Activated naive CD4-positive, alpha-beta T cell treated with anti-CD3 and anti-CD28 coated beads for 36 hours (primary cell): ENCODE measurements at regions of chr20 and their contacts with region 1.

Region 1: GRCh38 chr20:45971675-45972499 is at the start of gene ZNF335:
- DNase-seq: peak; percentile 93
- H3K4me3 Mint-ChIP-seq: peak within 1 kb of the TSS; percentile 93
- H3K27ac Mint-ChIP-seq: peak within 1 kb of the TSS; percentile 100
- H3K4me1 Mint-ChIP-seq: peaks cover 16% of the 10 kb centered on the region
- H3K27me3 Mint-ChIP-seq: no peaks in the 10 kb centered on the region
- total RNA-seq, gene ZNF335: 26.8 to 28.0 TPM

Region 2: GRCh38 chr20:45792332-45792686 is 179.6 kb before region 1 on chr20:
- CTCF ChIA-PET with region 1: interaction called, 8 read pairs
- intact Hi-C with region 1: loop called (anchors 2 kb)
- DNase-seq: no peak
- H3K4me3 Mint-ChIP-seq: peak overlapping the region; percentile 86
- H3K27ac Mint-ChIP-seq: peak overlapping the region; percentile 63
- H3K4me1 Mint-ChIP-seq: peaks cover 9% of the 10 kb centered on the region
- H3K27me3 Mint-ChIP-seq: no peaks in the 10 kb centered on the region

Region 3: GRCh38 chr20:45857114-45857881 is 114.6 kb before region 1 on chr20 and contains the starts of genes ACOT8 and ZSWIM3:
- CTCF ChIA-PET with region 1: interaction called, 5 read pairs
- intact Hi-C with region 1: loop called (anchors 1 kb)
- DNase-seq: peak; percentile 98
- H3K4me3 Mint-ChIP-seq: peak within 1 kb of the TSS; percentile 95
- H3K27ac Mint-ChIP-seq: peak within 1 kb of the TSS; percentile 98
- H3K4me1 Mint-ChIP-seq: peaks cover 44% of the 10 kb centered on the region
- H3K27me3 Mint-ChIP-seq: no peaks in the 10 kb centered on the region
- total RNA-seq, gene ACOT8: 21.4 to 23.3 TPM
- total RNA-seq, gene ZSWIM3: 3.3 to 3.7 TPM

Region 4: DNA sequence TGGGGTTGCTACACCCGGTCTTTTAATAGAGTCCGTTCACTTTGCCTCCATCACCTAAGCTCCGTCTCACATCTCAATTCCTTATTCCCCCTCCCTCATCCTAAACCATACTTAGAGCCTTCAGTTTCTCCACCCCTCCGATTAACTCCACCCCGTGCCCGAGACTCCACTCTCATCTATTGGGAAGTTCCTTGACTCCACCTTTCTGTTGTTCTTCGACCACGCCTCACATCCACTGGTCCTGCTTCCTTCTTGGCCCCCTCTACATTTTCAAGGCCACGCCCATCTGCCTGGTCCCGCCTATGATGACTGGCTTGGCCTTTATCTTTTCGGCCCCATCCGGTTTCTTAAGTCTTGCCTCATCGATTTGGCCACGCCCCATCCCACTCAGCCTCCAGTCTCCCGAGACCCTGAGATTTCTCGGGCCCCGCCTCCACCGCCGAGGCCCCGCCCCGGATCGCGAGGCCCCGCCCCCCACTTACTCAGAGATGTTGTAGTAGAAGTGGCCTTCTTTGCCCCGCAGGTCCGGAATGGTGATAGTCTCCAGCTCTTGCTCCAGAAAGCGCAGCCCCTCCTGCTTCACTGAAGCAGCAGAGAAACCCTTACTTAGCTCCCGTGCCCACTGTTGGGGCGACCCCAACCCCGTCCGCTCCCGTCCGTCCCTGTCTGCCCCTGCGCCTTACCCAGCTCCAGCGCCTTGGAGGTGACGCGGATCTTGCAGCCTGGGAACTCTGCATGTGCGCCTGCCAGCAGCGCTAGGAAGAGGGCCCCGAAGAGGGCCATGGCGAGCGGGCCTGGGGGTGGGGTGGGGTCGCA is 61.0 kb before region 1 on chr20:
- CTCF ChIA-PET with region 1: interaction called, 4 read pairs
- intact Hi-C with region 1: loop called (anchors 1 kb)
- DNase-seq: peak; percentile 97
- H3K4me3 Mint-ChIP-seq: peak overlapping the region; percentile 82
- H3K27ac Mint-ChIP-seq: peak overlapping the region; percentile 25
- H3K4me1 Mint-ChIP-seq: peaks cover 20% of the 10 kb centered on the region
- H3K27me3 Mint-ChIP-seq: peaks cover 16% of the 10 kb centered on the region

Region 5: GRCh38 chr20:45953672-45954071 is 18.2 kb before region 1 on chr20:
- CTCF ChIA-PET with region 1: interaction called, 62 read pairs
- intact Hi-C with region 1: no loop called
- DNase-seq: no peak
- H3K4me3 Mint-ChIP-seq: no peak overlapping the region
- H3K27ac Mint-ChIP-seq: no peak overlapping the region
- H3K4me1 Mint-ChIP-seq: no peaks in the 10 kb centered on the region
- H3K27me3 Mint-ChIP-seq: no peaks in the 10 kb centered on the region

Region 6: DNA sequence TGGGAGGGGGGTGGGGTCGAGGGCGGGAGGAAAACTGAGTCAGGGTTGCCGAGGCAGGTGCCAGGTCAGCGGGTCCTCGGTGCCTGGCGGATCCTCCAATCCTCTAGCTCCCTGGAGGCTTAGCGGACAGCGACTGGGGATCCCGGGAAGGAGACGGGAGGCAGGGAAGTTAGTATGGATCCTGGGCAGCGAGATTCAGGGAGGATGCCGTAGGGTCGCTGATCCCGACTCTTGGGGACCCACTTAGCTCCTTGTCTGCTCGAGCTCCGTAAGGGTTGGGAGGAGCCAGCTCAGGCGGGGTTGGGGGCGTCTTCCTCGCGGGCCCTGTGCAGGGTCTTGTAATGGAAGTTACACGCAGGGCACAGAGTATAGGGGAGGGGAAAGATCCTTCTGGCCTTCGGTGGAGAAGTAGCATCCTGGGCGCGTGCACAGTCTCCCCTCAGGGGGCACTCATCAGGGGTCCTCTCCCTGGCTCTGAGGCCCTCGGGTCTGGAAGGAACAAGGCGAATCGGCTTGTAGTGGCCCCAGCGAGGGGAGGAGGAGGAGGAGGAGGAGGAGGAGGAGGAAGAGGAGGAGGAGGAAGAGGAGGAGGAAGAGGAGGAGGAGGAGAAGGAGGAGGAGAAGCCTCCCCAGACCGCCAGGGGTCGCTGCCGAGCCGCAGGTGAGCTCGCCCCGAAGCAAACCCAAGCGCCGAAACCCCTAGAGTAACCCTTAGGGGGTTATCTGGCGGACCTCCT is 50.7 kb after region 1 on chr20:
- CTCF ChIA-PET with region 1: interaction called, 9 read pairs
- intact Hi-C with region 1: loop called (anchors 1 kb)
- DNase-seq: peak; percentile 83
- H3K4me3 Mint-ChIP-seq: peak overlapping the region; percentile 63
- H3K27ac Mint-ChIP-seq: no peak overlapping the region
- H3K4me1 Mint-ChIP-seq: peaks cover 8% of the 10 kb centered on the region
- H3K27me3 Mint-ChIP-seq: peaks cover 32% of the 10 kb centered on the region

Region 7: DNA sequence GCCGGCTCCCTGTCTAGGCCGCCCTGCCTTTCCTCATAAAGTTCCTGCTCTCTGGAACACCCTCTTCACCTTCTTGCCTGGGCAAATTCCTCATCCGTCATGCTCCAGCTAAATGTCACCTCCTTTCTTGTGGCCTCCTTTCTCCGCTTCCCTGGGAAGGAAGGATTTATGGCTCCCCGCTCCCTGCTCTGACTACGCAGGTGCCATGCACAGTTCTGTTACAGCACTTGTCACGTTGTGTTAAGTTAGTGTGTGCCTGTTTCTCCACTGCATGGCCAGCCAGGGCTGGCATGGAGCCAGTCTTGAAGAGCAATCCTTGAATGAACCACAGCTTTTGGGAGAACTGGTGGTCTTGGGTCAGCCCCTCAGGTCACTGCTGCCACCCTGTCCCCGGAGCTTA is 208.0 kb after region 1 on chr20:
- CTCF ChIA-PET with region 1: no interaction called
- intact Hi-C with region 1: no loop called
- DNase-seq: no peak
- H3K4me3 Mint-ChIP-seq: no peak overlapping the region
- H3K27ac Mint-ChIP-seq: no peak overlapping the region
- H3K4me1 Mint-ChIP-seq: no peaks in the 10 kb centered on the region
- H3K27me3 Mint-ChIP-seq: peaks cover 26% of the 10 kb centered on the region

Region 8: GRCh38 chr20:46243707-46244628 is 272.1 kb after region 1 on chr20:
- CTCF ChIA-PET with region 1: no interaction called
- intact Hi-C with region 1: no loop called
- DNase-seq: no peak
- H3K4me3 Mint-ChIP-seq: no peak overlapping the region
- H3K27ac Mint-ChIP-seq: no peak overlapping the region
- H3K4me1 Mint-ChIP-seq: no peaks in the 10 kb centered on the region
- H3K27me3 Mint-ChIP-seq: peaks cover 38% of the 10 kb centered on the region